Activated CD8-positive, alpha-beta memory T cell treated with anti-CD3 and anti-CD28 coated beads, Interleukin-2, amount 10 ng/mL, durations not matched to agents 7 days and 5 days (primary cell): ENCODE measurements at regions of chr6 and their contacts with region 1.

Region 1: GRCh38 chr6:134640975-134641429 is 308.9 kb downstream of the ALDH8A1 start:
- DNase-seq: peak; percentile 81
- ATAC-seq: peak; percentile 89
- H3K4me3 Mint-ChIP-seq: no peak overlapping the region
- H3K27ac Mint-ChIP-seq: no peak overlapping the region
- H3K4me1 Mint-ChIP-seq: peaks cover 22% of the 10 kb centered on the region
- H3K27me3 Mint-ChIP-seq: no peaks in the 10 kb centered on the region

Region 2: DNA sequence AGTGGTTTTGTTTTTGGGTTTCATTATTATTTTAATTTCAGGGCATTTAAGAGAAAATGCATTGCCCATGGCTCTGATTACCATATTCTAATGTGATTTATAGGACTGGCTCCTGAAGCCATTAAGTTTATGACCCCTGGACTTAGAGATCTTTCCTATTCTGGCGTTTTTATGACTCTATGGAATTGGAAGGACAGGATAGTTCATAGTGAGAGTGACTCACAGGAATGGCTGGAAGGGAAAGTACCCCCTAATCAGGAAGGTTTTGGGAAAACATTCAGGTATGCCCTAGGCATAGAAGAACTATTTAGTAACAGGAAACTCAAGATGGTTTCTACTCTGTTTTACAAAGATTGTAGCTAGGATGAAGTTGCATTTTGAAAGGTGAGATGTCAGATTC is 480.0 kb before region 1 on chr6:
- CTCF ChIA-PET with region 1: interaction called, 10 read pairs
- DNase-seq: no peak
- ATAC-seq: no peak
- H3K4me3 Mint-ChIP-seq: no peak overlapping the region
- H3K27ac Mint-ChIP-seq: no peak overlapping the region
- H3K4me1 Mint-ChIP-seq: no peaks in the 10 kb centered on the region
- H3K27me3 Mint-ChIP-seq: no peaks in the 10 kb centered on the region

Region 3: DNA sequence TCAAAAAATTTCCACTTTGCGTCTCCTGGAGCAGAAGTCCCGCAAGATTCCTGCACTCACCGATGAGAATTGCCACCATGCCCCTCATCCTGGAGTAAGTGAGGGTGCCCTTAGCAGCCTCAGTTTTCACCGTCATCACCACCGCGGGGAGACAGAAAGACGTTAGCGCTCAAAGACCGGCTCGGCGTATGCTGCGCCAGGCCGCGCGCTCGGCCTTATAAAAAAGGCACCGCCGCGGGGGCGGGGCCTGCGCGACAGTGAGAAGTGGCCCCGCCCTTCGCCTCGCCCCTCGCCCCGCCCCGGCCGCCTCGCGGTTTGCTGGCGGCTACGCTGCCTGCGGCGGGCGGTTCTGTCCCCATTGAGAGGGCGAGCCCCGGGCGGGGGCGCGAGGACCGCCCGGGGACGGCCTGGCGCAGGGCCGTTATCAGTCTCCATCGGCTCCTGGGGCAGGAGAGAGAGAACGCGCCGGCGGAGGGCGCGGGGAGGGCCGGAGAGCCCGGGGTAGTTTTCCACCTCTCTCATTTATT is 466.3 kb before region 1 on chr6:
- CTCF ChIA-PET with region 1: interaction called, 24 read pairs
- DNase-seq: peak; percentile 92
- ATAC-seq: peak; percentile 79
- H3K4me3 Mint-ChIP-seq: peak overlapping the region; percentile 83
- H3K27ac Mint-ChIP-seq: peak overlapping the region; percentile 94
- H3K4me1 Mint-ChIP-seq: peaks cover 38% of the 10 kb centered on the region
- H3K27me3 Mint-ChIP-seq: no peaks in the 10 kb centered on the region

Region 4: GRCh38 chr6:134436281-134436815 is 204.7 kb before region 1 on chr6:
- CTCF ChIA-PET with region 1: interaction called, 12 read pairs
- DNase-seq: peak; percentile 91
- ATAC-seq: peak; percentile 93
- H3K4me3 Mint-ChIP-seq: peak overlapping the region; percentile 73
- H3K27ac Mint-ChIP-seq: peak overlapping the region; percentile 96
- H3K4me1 Mint-ChIP-seq: peaks cover 31% of the 10 kb centered on the region
- H3K27me3 Mint-ChIP-seq: no peaks in the 10 kb centered on the region

Region 5: GRCh38 chr6:134609716-134610261 is 31.2 kb before region 1 on chr6:
- CTCF ChIA-PET with region 1: no interaction called
- DNase-seq: no peak
- ATAC-seq: no peak
- H3K4me3 Mint-ChIP-seq: no peak overlapping the region
- H3K27ac Mint-ChIP-seq: no peak overlapping the region
- H3K4me1 Mint-ChIP-seq: no peaks in the 10 kb centered on the region
- H3K27me3 Mint-ChIP-seq: peaks cover under 1% of the 10 kb centered on the region

Region 6: GRCh38 chr6:134619789-134620188 is 21.2 kb before region 1 on chr6:
- CTCF ChIA-PET with region 1: interaction called, 14 read pairs
- DNase-seq: no peak
- ATAC-seq: no peak
- H3K4me3 Mint-ChIP-seq: no peak overlapping the region
- H3K27ac Mint-ChIP-seq: no peak overlapping the region
- H3K4me1 Mint-ChIP-seq: peaks cover 8% of the 10 kb centered on the region
- H3K27me3 Mint-ChIP-seq: peaks cover 16% of the 10 kb centered on the region

Region 7: GRCh38 chr6:134628154-134628553 is 12.8 kb before region 1 on chr6:
- CTCF ChIA-PET with region 1: interaction called, 11 read pairs
- DNase-seq: no peak
- ATAC-seq: no peak
- H3K4me3 Mint-ChIP-seq: no peak overlapping the region
- H3K27ac Mint-ChIP-seq: no peak overlapping the region
- H3K4me1 Mint-ChIP-seq: peaks cover 7% of the 10 kb centered on the region
- H3K27me3 Mint-ChIP-seq: peaks cover 25% of the 10 kb centered on the region

Region 8: DNA sequence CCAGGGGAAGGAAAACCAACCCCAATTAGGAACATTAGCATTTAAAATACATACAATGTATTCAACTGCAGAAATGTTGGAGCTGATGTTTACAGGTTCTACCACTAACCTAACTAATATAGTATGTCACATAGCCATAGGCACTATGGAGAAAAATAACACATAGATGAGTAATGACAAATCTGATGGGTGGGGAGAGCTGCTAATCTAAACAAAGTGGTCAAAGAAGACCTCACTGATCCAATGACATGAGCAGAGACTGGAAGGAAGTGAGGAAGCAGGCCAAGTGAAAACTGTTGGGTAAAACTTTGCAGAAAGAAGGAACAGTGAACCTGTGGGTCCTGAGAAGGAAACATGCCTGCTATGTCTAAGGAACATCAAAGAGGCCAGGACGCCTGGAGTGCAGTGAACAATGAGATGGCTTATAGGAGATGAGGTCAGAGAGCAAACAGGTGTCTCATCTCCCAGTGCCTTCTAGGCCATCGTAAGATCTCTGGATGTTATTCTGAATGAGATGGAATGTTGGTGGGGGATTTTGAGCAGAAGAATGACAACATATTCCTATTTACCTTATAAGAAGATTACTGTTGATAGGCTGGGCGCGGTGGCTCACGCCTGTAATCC is 173.2 kb after region 1 on chr6:
- CTCF ChIA-PET with region 1: no interaction called
- DNase-seq: no peak
- ATAC-seq: no peak
- H3K4me3 Mint-ChIP-seq: no peak overlapping the region
- H3K27ac Mint-ChIP-seq: no peak overlapping the region
- H3K4me1 Mint-ChIP-seq: no peaks in the 10 kb centered on the region
- H3K27me3 Mint-ChIP-seq: peaks cover 13% of the 10 kb centered on the region